ENCODE measurements at regions of chrX and their contacts with region 1.

Region 1: GRCh38 chrX:11770320-11770719 is 12.3 kb downstream of the MSL3 start:
- DNase-seq: peak; percentile 61
- ATAC-seq: peak; percentile 75
- H3K4me3 Mint-ChIP-seq: no peak overlapping the region
- H3K27ac Mint-ChIP-seq: peak overlapping the region; percentile 93
- H3K4me1 Mint-ChIP-seq: peaks cover 37% of the 10 kb centered on the region
- H3K27me3 Mint-ChIP-seq: no peaks in the 10 kb centered on the region

Region 2: DNA sequence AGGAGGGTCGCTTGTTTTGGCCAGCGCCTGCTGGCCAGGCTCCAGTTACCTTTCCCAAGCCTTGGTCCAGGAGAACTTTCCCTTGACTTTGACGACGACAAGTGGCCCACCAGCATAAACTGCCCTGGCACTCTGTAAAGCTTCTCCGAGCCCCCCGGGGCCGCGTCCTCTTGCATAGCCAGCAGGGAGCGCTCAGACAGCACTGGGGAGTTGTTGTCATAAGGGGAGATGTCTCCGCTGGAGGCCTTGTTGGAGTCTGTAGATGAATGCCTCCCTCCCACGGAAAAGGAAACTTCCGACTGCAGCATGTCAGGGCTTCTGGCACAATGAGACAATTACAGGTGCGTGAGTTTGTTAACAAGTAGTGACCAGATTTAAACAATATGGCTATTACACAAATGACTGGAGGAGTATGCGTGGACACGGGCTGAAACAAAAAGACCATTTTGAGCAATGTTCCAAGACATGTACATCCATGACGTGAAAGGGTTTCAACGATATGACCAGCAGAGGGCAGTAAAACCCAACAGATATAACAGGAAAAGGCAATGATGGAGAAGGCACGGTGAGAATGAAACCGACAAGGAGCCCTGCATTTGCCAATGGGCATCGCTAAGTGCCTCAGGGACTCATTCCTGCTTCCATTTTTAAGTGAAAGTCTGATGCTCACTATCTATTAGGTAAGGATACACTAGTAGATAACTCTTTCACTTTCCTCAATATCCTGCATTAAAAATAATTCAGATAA is 626.2 kb before region 1 on chrX:
- CTCF ChIA-PET with region 1: no interaction called
- POLR2A ChIA-PET with region 1: no interaction called
- intact Hi-C with region 1: loop called in 1 of 2 experiments (anchors 5 kb)
- DNase-seq: peak; percentile 57
- ATAC-seq: peak; percentile 75
- H3K4me3 Mint-ChIP-seq: no peak overlapping the region
- H3K27ac Mint-ChIP-seq: no peak overlapping the region
- H3K4me1 Mint-ChIP-seq: peaks cover 2% of the 10 kb centered on the region
- H3K27me3 Mint-ChIP-seq: peaks cover 2% of the 10 kb centered on the region

Region 3: GRCh38 chrX:11381464-11381863 is 388.9 kb before region 1 on chrX:
- CTCF ChIA-PET with region 1: no interaction called
- POLR2A ChIA-PET with region 1: no interaction called
- intact Hi-C with region 1: loop called in 1 of 2 experiments (anchors 5 kb)
- DNase-seq: peak; percentile 8
- ATAC-seq: no peak
- H3K4me3 Mint-ChIP-seq: no peak overlapping the region
- H3K27ac Mint-ChIP-seq: no peak overlapping the region
- H3K4me1 Mint-ChIP-seq: no peaks in the 10 kb centered on the region
- H3K27me3 Mint-ChIP-seq: peaks cover 4% of the 10 kb centered on the region

Region 4: GRCh38 chrX:11665144-11666111 is 104.9 kb before region 1 on chrX and contains the start of gene ARHGAP6:
- CTCF ChIA-PET with region 1: interaction called, 3 read pairs
- POLR2A ChIA-PET with region 1: no interaction called
- intact Hi-C with region 1: loop called in 1 of 2 experiments (anchors 5 kb)
- DNase-seq: no peak
- ATAC-seq: no peak
- H3K4me3 Mint-ChIP-seq: peak within 1 kb of the TSS; percentile 28
- H3K27ac Mint-ChIP-seq: no peak within 1 kb of the TSS
- H3K4me1 Mint-ChIP-seq: peaks cover 4% of the 10 kb centered on the region
- H3K27me3 Mint-ChIP-seq: peaks cover 46% of the 10 kb centered on the region
- total RNA-seq, gene ARHGAP6: not detected

Region 5: GRCh38 chrX:11724122-11725017 is 46.0 kb before region 1 on chrX:
- CTCF ChIA-PET with region 1: interaction called, 3 read pairs
- POLR2A ChIA-PET with region 1: no interaction called
- intact Hi-C with region 1: loop called in 1 of 2 experiments (anchors 1 kb)
- DNase-seq: peak; percentile 18
- ATAC-seq: no peak
- H3K4me3 Mint-ChIP-seq: no peak overlapping the region
- H3K27ac Mint-ChIP-seq: no peak overlapping the region
- H3K4me1 Mint-ChIP-seq: no peaks in the 10 kb centered on the region
- H3K27me3 Mint-ChIP-seq: no peaks in the 10 kb centered on the region

Region 6: DNA sequence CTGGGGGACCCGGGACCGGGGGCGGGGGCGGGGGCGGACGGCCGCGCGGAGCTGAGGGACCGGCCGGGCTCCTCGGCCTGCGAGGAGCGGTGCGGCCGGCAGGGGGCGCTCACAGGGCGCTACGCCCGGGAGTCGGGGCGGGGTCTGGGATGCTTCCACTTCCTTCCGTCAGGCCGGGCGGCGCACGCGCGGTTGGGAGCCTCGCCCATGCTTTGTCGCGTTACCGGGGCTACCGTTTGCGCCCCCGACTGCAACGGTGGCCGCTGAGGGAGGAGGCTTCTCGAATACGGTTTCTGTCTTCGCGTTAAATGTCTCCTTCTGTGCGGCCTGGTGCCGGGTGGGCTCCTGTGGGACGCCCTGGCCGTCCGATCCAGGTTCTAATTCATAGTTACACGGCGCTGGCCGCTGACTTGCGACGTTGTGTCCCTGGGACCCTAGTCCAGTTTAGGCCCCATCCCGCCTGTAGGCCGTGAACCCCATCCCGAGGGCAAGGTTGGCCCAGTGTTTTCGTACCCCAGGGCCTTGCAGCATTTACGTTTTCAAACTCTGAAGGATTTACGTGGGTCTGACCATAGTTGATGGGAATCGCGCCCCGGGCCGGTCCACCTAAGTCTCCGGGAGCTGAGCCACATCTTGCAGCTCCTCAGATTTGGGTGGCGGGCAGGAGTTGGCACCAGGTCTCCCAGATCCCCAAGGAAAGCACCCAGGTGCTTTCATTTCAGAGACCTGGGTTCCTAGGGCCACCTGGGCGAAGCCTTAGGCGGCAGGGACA is 11.7 kb before region 1 on chrX:
- CTCF ChIA-PET with region 1: interaction called, 5 read pairs
- POLR2A ChIA-PET with region 1: interaction called, 6 read pairs
- intact Hi-C with region 1: loop called (anchors 1 to 2 kb)
- DNase-seq: peak; percentile 93
- ATAC-seq: peak; percentile 57
- H3K4me3 Mint-ChIP-seq: peak overlapping the region; percentile 94
- H3K27ac Mint-ChIP-seq: peak overlapping the region; percentile 96
- H3K4me1 Mint-ChIP-seq: peaks cover 14% of the 10 kb centered on the region
- H3K27me3 Mint-ChIP-seq: no peaks in the 10 kb centered on the region

Region 7: DNA sequence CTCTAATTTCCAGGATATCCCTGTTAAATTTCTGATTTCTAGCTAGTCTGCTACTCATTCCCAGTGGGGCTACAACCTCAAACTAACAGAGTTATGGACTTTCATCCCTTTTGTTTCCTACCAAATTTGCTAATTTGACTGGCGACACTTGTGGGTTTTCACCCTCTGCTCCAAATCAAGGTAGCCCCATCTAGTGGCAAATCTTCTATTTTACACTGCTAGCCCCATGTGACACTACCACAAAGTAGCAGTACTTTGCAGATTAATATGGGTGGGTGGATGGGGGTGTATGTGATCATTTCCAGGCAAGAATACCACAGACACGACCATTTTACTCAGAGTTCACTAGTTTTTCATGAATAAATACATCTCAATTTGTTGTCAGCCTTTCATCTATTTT is 138.1 kb after region 1 on chrX:
- CTCF ChIA-PET with region 1: no interaction called
- POLR2A ChIA-PET with region 1: no interaction called
- intact Hi-C with region 1: loop called in 1 of 2 experiments (anchors 5 kb)
- DNase-seq: peak; percentile 32
- ATAC-seq: peak; percentile 84
- H3K4me3 Mint-ChIP-seq: no peak overlapping the region
- H3K27ac Mint-ChIP-seq: no peak overlapping the region
- H3K4me1 Mint-ChIP-seq: peaks cover 8% of the 10 kb centered on the region
- H3K27me3 Mint-ChIP-seq: no peaks in the 10 kb centered on the region